ENCODE measurements at regions of chr4 and their contacts with region 1.

Region 1: GRCh38 chr4:5758741-5759140 is 47.7 kb downstream of the EVC start:
- DNase-seq: peak; percentile 84
- H3K4me3 Mint-ChIP-seq: no peak overlapping the region
- H3K27ac Mint-ChIP-seq: no peak overlapping the region
- H3K4me1 Mint-ChIP-seq: peaks cover 14% of the 10 kb centered on the region
- H3K27me3 Mint-ChIP-seq: no peaks in the 10 kb centered on the region

Region 2: GRCh38 chr4:5711479-5712184 is 47.1 kb before region 1 on chr4:
- CTCF ChIA-PET with region 1: no interaction called
- POLR2A ChIA-PET with region 1: interaction called, 3 read pairs
- intact Hi-C with region 1: loop called (anchors 1 kb)
- DNase-seq: no peak
- H3K4me3 Mint-ChIP-seq: peak overlapping the region; percentile 48
- H3K27ac Mint-ChIP-seq: no peak overlapping the region
- H3K4me1 Mint-ChIP-seq: peaks cover 20% of the 10 kb centered on the region
- H3K27me3 Mint-ChIP-seq: peaks cover 39% of the 10 kb centered on the region

Region 3: DNA sequence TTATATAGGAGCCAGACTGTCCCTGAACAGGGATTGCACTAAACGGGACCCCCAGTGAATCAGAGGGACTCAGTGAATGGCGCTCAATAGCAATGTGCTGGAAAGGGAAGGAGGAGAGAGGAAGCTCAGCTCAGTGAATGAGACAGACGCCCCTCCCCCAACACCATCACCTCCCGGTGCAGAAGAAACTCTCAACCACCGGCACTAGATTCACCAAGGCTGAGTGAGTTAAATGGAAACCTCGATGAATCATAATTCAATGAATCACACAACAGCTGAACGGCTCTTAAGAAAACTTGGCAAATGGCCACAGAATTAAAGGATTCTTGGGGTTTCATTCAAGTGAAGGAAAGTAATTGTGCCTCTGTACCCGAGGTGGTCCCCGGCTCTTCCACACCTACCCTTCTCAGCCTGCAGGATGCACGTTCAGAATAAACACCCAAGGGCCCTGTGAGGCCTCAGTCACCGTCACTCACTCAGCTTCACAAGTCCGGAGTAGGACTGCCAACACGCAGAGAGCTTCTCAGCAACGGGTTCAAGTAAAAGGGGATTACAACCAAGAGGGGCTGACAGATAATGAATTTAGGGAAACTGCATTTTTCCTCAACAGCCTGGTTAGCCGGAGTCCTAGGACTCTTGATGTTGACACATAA is 104.8 kb after region 1 on chr4:
- CTCF ChIA-PET with region 1: no interaction called
- POLR2A ChIA-PET with region 1: no interaction called
- intact Hi-C with region 1: loop called (anchors 2 kb)
- DNase-seq: peak; percentile 76
- H3K4me3 Mint-ChIP-seq: no peak overlapping the region
- H3K27ac Mint-ChIP-seq: no peak overlapping the region
- H3K4me1 Mint-ChIP-seq: peaks cover 22% of the 10 kb centered on the region
- H3K27me3 Mint-ChIP-seq: peaks cover 8% of the 10 kb centered on the region

Measured in activated CD4-positive, alpha-beta memory T cell treated with anti-CD3 and anti-CD28 coated beads for 36 hours (primary cell).